Motor neuron (in vitro differentiated cells): ENCODE measurements at regions of chr11 and their contacts with region 1.

Region 1: GRCh38 chr11:43825217-43825816 is 55.3 kb upstream of the ALKBH3 start:
- ATAC-seq: peak in 2 of 8 experiments; percentile 18 to 36
- H3K4me3 ChIP-seq: no peak overlapping the region
- H3K27ac ChIP-seq: no peak overlapping the region
- H3K4me1 ChIP-seq: no peaks in the 10 kb centered on the region

Region 2: DNA sequence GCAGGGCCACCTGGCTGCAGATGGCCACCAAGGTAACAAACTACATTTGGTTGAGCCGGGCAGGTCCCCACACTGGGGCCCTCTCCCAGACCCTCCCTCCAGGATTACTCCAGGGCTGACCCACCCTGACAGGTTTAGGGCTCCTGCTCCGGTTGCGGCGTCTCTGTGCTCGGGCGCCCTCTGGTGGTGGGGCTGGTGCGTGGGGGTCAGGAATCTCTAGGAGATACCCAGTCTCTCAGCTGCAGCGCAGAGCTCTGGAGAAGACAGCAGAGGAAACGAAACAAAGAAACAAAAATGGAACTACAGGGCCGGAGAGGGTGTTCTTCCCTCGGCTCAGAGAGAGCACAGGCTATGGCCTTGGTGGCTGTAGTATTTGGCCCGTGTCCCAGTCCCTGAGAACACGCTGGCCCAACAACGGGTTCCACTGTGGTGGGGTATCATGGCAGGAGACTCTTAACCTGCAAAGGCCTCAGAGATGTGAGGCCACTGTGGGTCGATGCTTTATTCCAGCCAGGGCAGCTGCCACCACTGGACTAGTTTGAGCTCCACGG is 119.5 kb after region 1 on chr11:
- in situ Hi-C with region 1: loop called in 1 of 9 experiments (anchors 25 kb)
- ATAC-seq: peak in 1 of 8 experiments; percentile 1
- H3K4me3 ChIP-seq: peak overlapping the region; percentile 42 to 71 (median 58)
- H3K27ac ChIP-seq: no peak overlapping the region
- H3K4me1 ChIP-seq: peaks cover 21 to 22% of the 10 kb centered on the region in 2 donors

Region 3: GRCh38 chr11:44130751-44131150 is 305.4 kb after region 1 on chr11:
- in situ Hi-C with region 1: no loop called
- ATAC-seq: no peak
- H3K4me3 ChIP-seq: no peak overlapping the region
- H3K27ac ChIP-seq: no peak overlapping the region
- H3K4me1 ChIP-seq: no peaks in the 10 kb centered on the region